Pancreas (tissue), 10 donors: ENCODE measurements at regions of chr1 and their contacts with region 1.

Region 1: DNA sequence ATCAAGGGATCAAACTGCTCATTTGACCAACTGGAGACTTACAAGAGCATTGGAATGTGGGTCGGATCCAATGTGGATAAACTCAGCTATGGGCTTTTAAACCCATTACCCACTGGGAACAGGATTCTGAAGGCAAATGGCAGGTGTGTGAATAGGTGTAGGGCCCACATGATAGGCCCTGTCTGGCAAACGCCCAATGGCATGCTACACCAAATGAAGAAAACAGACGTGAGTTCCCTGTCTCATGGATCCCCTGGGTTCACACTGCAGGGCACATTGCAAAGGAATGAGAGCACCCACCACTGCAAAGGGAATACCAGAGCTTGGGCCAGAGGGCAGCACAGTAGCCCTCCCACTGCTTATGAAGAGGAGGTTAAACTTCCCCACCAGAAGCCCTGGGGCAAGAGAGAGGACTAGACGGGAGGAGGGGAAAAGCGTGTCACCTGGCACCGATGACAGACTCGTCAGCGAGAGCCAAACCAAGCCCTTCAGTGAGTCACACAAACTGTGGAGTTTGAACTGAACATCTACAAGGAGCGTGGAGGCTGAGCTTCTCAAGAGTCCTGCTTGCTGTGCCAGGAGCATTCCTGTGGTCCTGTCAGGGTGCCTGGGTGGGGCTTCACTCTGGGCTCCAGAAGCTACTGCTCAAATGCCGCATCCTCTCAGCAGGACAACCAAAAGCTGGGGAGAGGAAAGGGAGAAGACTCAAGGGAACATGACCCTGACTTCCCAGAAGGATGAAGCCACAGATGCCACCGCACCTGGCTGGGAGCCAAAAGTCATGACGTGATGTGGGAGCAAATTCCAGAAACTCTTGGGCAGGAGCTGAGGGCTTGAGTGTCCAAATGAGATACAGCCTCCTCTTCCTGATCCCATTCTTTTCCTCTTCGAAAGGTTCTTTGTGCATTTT is 61.1 kb downstream of the TOMM20 start:
- DNase-seq: peak in 5 of 6 donors; percentile 70 to 86 (median 84)
- ATAC-seq: peak; percentile 62 to 80 (median 72)
- H3K4me3 ChIP-seq: no peak overlapping the region
- H3K27ac ChIP-seq: peak overlapping the region; percentile 18 to 90 (median 62)
- H3K4me1 ChIP-seq: peaks cover 16 to 46% (median 36%) of the 10 kb centered on the region in 3 donors
- H3K27me3 ChIP-seq: no peaks in the 10 kb centered on the region
- CTCF ChIP-seq: no peak

Region 2: DNA sequence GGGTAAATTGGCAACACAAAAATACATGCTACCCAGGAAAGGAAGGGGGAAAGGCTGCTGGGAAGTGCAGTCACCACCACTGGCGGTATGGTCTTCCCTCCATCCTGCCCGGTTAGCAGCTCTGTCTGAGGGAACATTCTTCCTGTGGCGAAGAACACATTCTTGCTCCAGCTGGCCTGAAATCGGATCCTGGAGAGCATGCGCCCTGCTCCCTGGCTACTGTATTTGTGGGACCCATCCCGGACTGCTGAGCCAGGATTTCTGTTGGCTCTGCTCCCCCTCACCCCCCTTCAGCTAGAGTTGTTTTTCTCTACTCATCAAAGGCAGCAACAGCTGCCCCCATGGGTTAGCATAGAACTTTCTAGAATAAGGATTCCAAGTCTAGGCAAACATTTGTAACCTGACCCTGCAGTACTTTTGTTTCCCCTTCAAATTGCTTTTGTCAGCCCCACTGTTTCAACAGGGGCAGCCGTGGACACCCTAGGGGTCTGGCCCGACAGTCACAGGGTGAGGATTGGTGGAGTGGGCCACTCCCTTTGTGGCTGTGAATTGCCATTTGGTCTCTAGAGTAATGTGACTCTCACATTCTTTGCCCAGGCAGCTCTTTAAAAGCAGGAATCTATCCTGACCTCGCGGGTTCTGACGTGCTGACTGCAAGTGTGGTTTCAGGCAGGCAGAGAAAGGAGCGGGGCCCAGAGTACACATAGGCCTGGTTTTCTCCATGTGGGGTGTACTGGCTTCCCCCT is 96.6 kb before region 1 on chr1:
- intact Hi-C with region 1: loop called in 1 of 3 experiments (anchors 5 kb)
- DNase-seq: peak in 3 of 6 donors; percentile 53 to 57 (median 55)
- ATAC-seq: peak; percentile 44 to 54 (median 50)
- H3K4me3 ChIP-seq: no peak overlapping the region
- H3K27ac ChIP-seq: peak overlapping the region; percentile 71 to 90 (median 86)
- H3K4me1 ChIP-seq: peaks cover 14 to 41% (median 32%) of the 10 kb centered on the region in 3 donors
- H3K27me3 ChIP-seq: no peaks in the 10 kb centered on the region
- CTCF ChIP-seq: no peak

Region 3: GRCh38 chr1:234980645-234981396 is 86.7 kb before region 1 on chr1:
- intact Hi-C with region 1: loop called in 1 of 3 experiments (anchors 10 kb)
- DNase-seq: peak in 3 of 6 donors; percentile 52 to 70 (median 63)
- ATAC-seq: peak; percentile 69 to 79 (median 76)
- H3K4me3 ChIP-seq: no peak overlapping the region
- H3K27ac ChIP-seq: peak overlapping the region; percentile 61 to 91 (median 82)
- H3K4me1 ChIP-seq: peaks cover 0 to 39% (median 32%) of the 10 kb centered on the region in 3 donors
- H3K27me3 ChIP-seq: no peaks in the 10 kb centered on the region
- CTCF ChIP-seq: no peak

Region 4: DNA sequence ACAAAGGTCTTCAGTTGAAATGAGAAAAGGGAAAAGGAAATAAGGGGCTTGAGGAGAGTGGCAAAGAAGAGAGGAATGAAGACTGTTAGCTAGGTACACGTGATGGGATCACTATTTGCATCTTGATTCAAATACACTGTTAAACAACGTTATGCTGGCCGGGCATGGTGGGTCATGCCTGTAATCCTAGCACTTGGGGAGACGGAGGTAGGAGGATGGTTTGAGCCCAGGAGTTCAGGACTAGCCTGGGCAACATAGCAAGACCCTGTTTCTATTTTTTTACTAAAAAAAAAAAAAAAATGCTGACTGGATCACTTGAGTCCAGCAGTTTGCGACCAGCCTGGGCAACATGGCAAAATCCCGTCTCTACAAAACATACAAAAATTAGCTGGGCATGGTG is 91.2 kb after region 1 on chr1:
- intact Hi-C with region 1: no loop called
- DNase-seq: no peak
- ATAC-seq: no peak
- H3K4me3 ChIP-seq: no peak overlapping the region
- H3K27ac ChIP-seq: no peak overlapping the region
- H3K4me1 ChIP-seq: peaks cover 0 to 10% (median 6%) of the 10 kb centered on the region in 3 donors
- H3K27me3 ChIP-seq: no peaks in the 10 kb centered on the region
- CTCF ChIP-seq: no peak

Region 5: GRCh38 chr1:235169986-235170385 is 102.5 kb after region 1 on chr1:
- intact Hi-C with region 1: no loop called
- DNase-seq: no peak
- ATAC-seq: no peak
- H3K4me3 ChIP-seq: no peak overlapping the region
- H3K27ac ChIP-seq: no peak overlapping the region
- H3K4me1 ChIP-seq: no peaks in the 10 kb centered on the region
- H3K27me3 ChIP-seq: no peaks in the 10 kb centered on the region
- CTCF ChIP-seq: no peak